Activated CD8-positive, alpha-beta T cell treated with anti-CD3 and anti-CD28 coated beads, Interleukin-2, amount 10 ng/mL, durations not matched to agents 7 days and 5 days (primary cell): ENCODE measurements at regions of chr5 and their contacts with region 1.

Region 1: GRCh38 chr5:181184857-181185251 is 20.1 kb downstream of the TRIM7 start:
- DNase-seq: no peak
- ATAC-seq: no peak
- H3K4me3 Mint-ChIP-seq: peak overlapping the region; percentile 84
- H3K27ac Mint-ChIP-seq: peak overlapping the region; percentile 90
- H3K4me1 Mint-ChIP-seq: peaks cover 49% of the 10 kb centered on the region
- H3K27me3 Mint-ChIP-seq: no peaks in the 10 kb centered on the region

Region 2: GRCh38 chr5:181167814-181168488 is 16.9 kb before region 1 on chr5:
- CTCF ChIA-PET with region 1: interaction called, 25 read pairs
- POLR2A ChIA-PET with region 1: interaction called, 10 read pairs
- DNase-seq: peak; percentile 56
- ATAC-seq: no peak
- H3K4me3 Mint-ChIP-seq: no peak overlapping the region
- H3K27ac Mint-ChIP-seq: peak overlapping the region; percentile 19
- H3K4me1 Mint-ChIP-seq: peaks cover 79% of the 10 kb centered on the region
- H3K27me3 Mint-ChIP-seq: peaks cover 39% of the 10 kb centered on the region

Region 3: DNA sequence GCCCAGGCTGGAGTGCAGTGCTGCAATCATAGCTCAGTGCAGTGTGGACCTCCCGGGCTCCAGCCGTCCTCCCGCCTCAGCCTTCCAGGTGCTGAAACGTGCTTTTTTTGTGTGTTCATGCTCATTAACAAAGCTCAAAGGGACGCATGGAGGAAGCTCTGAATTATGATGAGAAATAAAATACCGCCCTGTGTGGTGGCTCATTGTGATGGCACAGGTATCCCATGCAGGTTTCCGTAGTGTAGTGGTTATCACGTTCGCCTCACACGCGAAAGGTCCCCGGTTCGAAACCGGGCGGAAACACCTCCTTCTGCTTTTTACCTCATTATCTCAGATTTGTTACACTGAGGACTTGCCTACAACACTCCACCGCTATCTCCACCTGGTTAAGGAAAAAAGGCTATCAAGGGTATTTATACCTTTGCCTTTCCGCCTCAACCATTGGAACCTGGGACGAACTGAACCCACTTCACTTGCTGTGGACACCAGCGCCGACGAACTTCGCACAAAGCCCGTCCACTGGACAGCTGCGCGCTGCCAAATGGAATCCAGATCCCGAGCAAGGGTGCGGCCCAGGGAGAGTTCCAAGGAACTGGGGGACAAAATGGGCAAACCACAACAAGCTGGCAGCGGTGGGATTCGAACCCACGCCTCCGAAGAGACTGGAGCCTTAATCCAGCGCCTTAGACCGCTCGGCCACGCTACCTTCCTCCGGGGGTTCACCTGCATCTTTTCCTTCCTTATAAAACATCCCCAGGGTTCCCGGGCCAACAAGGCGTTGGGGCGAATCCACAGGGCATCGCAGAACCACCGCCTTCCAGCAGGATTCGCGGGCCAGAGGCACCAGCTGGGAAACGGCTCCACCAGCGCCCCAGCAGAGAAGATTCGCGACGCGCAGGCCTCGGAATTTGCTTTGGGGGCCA is 11.2 kb before region 1 on chr5:
- CTCF ChIA-PET with region 1: interaction called, 25 read pairs
- POLR2A ChIA-PET with region 1: interaction called, 10 read pairs
- DNase-seq: peak; percentile 85
- ATAC-seq: peak; percentile 79
- H3K4me3 Mint-ChIP-seq: peak overlapping the region; percentile 81
- H3K27ac Mint-ChIP-seq: peak overlapping the region; percentile 96
- H3K4me1 Mint-ChIP-seq: peaks cover 47% of the 10 kb centered on the region
- H3K27me3 Mint-ChIP-seq: peaks cover 28% of the 10 kb centered on the region

Region 4: GRCh38 chr5:181207214-181208107 is 22.6 kb after region 1 on chr5:
- CTCF ChIA-PET with region 1: interaction called, 78 read pairs
- POLR2A ChIA-PET with region 1: interaction called, 20 read pairs
- DNase-seq: peak; percentile 89
- ATAC-seq: peak; percentile 68
- H3K4me3 Mint-ChIP-seq: peak overlapping the region; percentile 78
- H3K27ac Mint-ChIP-seq: peak overlapping the region; percentile 86
- H3K4me1 Mint-ChIP-seq: peaks cover 40% of the 10 kb centered on the region
- H3K27me3 Mint-ChIP-seq: peaks cover 23% of the 10 kb centered on the region

Region 5: GRCh38 chr5:181260387-181261319 is 75.8 kb after region 1 on chr5 and contains the start of gene TRIM52:
- CTCF ChIA-PET with region 1: interaction called, 8 read pairs
- POLR2A ChIA-PET with region 1: interaction called, 34 read pairs
- DNase-seq: peak; percentile 94
- ATAC-seq: peak; percentile 87
- H3K4me3 Mint-ChIP-seq: peak within 1 kb of the TSS; percentile 93
- H3K27ac Mint-ChIP-seq: peak within 1 kb of the TSS; percentile 96
- H3K4me1 Mint-ChIP-seq: peaks cover 35% of the 10 kb centered on the region
- H3K27me3 Mint-ChIP-seq: no peaks in the 10 kb centered on the region
- total RNA-seq, gene TRIM52: 22.4 to 23.2 TPM